Common myeloid progenitor, CD34-positive (primary cell): ENCODE measurements at regions of chr7 and their contacts with region 1.

Region 1: DNA sequence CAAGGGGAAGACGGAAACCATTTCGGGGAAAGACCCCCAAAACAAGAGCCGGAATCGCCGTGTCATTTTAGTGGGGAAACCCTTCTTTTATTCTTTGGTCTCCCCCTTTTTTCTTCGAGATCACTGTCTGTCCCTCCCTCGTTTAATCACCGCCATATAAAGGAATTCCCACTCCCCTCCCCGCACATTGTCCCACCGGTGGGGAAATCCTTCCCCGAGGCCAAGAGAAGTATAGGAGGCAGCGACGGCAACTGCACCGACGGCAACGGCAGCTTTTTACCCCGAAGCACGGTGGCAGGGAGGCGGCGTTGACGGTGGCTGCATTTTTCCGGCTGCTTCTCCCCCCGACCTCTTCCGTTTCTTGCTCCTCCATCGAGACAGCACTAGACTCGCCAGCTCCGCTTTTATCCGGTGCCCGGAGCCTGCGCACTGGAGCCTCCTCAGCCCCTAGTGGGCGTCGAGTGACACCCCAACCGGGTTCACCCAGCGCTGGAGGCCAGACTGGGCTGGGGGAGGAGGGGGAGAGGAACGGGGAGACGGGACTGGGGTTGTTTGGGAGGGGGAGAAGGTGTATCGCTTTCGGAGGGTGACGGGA is 687 bp upstream of the KMT2E start:
- DNase-seq: peak; percentile 93 to 96 (median 96)
- H3K4me3 ChIP-seq: peak overlapping the region; percentile 91 to 100 (median 99)
- H3K27ac ChIP-seq: peak overlapping the region; percentile 100
- H3K4me1 ChIP-seq: peaks cover 36 to 61% (median 43%) of the 10 kb centered on the region in 4 experiments
- H3K27me3 ChIP-seq: no peaks in the 10 kb centered on the region

Region 2: DNA sequence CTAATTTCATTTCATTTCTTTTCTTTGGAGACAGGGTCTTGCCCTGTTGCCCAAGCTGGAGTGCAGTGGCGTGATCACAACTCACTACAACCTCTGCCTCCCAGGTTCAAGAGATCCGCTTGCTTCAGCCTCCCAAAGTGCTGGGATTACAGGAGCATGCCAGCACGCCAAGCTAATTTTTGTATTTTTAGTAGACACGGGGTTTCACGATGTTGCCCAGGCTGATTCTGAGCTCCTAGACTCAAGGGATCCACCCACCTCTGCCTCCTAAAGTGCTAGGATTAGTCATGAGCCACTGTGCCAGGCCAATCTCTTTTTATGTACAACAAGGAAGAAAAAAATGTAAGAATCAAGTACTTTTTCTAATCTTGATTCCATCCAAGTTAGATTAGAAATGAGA is 10.0 kb before region 1 on chr7:
- CTCF ChIA-PET with region 1: interaction called, 17 read pairs
- POLR2A ChIA-PET with region 1: interaction called, 9 read pairs
- DNase-seq: no peak
- H3K4me3 ChIP-seq: no peak overlapping the region
- H3K27ac ChIP-seq: peak overlapping the region in 1 of 2 experiments; percentile 71
- H3K4me1 ChIP-seq: peaks cover 0 to 33% (median 13%) of the 10 kb centered on the region in 4 experiments
- H3K27me3 ChIP-seq: no peaks in the 10 kb centered on the region

Region 3: GRCh38 chr7:105024743-105025142 is 11.4 kb after region 1 on chr7:
- CTCF ChIA-PET with region 1: interaction called, 26 read pairs
- POLR2A ChIA-PET with region 1: interaction called, 3 read pairs
- DNase-seq: no peak
- H3K4me3 ChIP-seq: no peak overlapping the region
- H3K27ac ChIP-seq: no peak overlapping the region
- H3K4me1 ChIP-seq: peaks cover 9 to 41% (median 31%) of the 10 kb centered on the region in 4 experiments
- H3K27me3 ChIP-seq: no peaks in the 10 kb centered on the region

Region 4: GRCh38 chr7:105036217-105037168 is 23.2 kb after region 1 on chr7:
- CTCF ChIA-PET with region 1: interaction called, 39 read pairs
- POLR2A ChIA-PET with region 1: interaction called, 10 read pairs
- DNase-seq: no peak
- H3K4me3 ChIP-seq: no peak overlapping the region
- H3K27ac ChIP-seq: no peak overlapping the region
- H3K4me1 ChIP-seq: peaks cover 0 to 12% (median 3%) of the 10 kb centered on the region in 4 experiments
- H3K27me3 ChIP-seq: no peaks in the 10 kb centered on the region

Region 5: GRCh38 chr7:105046414-105046813 is 33.1 kb after region 1 on chr7:
- CTCF ChIA-PET with region 1: interaction called, 39 read pairs
- POLR2A ChIA-PET with region 1: interaction called, 4 read pairs
- DNase-seq: no peak
- H3K4me3 ChIP-seq: no peak overlapping the region
- H3K27ac ChIP-seq: no peak overlapping the region
- H3K4me1 ChIP-seq: no peaks in the 10 kb centered on the region
- H3K27me3 ChIP-seq: no peaks in the 10 kb centered on the region

Region 6: GRCh38 chr7:105112440-105113418 is 99.4 kb after region 1 on chr7:
- CTCF ChIA-PET with region 1: no interaction called
- POLR2A ChIA-PET with region 1: no interaction called
- DNase-seq: no peak
- H3K4me3 ChIP-seq: no peak overlapping the region
- H3K27ac ChIP-seq: no peak overlapping the region
- H3K4me1 ChIP-seq: no peaks in the 10 kb centered on the region
- H3K27me3 ChIP-seq: no peaks in the 10 kb centered on the region